ENCODE measurements at regions of chr4 and their contacts with region 1.

Region 1: DNA sequence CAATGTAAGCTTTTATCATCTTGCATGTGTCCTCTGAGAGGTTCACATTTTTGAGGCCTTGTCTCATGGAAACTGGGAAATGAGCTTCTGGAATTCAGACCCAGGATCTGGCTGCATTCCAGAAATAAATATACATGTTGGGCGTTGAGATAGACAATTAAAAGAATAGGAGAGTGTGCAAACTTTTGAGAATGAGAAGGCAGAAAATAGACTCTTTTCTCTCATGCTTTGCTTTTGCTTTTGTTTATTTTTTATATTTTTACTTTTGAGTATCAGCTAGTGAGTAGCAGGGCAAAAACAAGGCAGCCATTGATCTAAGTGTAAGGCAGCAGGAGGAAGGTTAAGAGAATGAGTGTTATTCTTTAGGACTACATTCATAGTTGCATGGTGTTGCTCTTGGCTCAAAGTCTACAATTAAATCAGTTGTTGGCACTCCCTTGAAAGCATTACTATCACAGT is 12.4 kb downstream of the SHROOM3 start:
- DNase-seq: peak; percentile 30
- H3K4me3 ChIP-seq: no peak overlapping the region
- H3K27ac ChIP-seq: no peak overlapping the region
- H3K4me1 ChIP-seq: peaks cover 8% of the 10 kb centered on the region
- H3K27me3 ChIP-seq: no peaks in the 10 kb centered on the region
- CTCF ChIP-seq: no peak

Region 2: GRCh38 chr4:76270244-76271175 is 176.9 kb before region 1 on chr4:
- CTCF ChIA-PET with region 1: interaction called, 11 read pairs
- dilution Hi-C with region 1: no loop called
- in situ Hi-C with region 1: no loop called
- intact Hi-C with region 1: no loop called
- DNase-seq: peak; percentile 85
- H3K4me3 ChIP-seq: no peak overlapping the region
- H3K27ac ChIP-seq: no peak overlapping the region
- H3K4me1 ChIP-seq: no peaks in the 10 kb centered on the region
- H3K27me3 ChIP-seq: no peaks in the 10 kb centered on the region
- CTCF ChIP-seq: no peak

Region 3: GRCh38 chr4:76377911-76378310 is 69.5 kb before region 1 on chr4:
- CTCF ChIA-PET with region 1: no interaction called
- dilution Hi-C with region 1: loop called (anchors 5 kb)
- in situ Hi-C with region 1: no loop called
- intact Hi-C with region 1: no loop called
- DNase-seq: no peak
- H3K4me3 ChIP-seq: no peak overlapping the region
- H3K27ac ChIP-seq: no peak overlapping the region
- H3K4me1 ChIP-seq: peaks cover 8% of the 10 kb centered on the region
- H3K27me3 ChIP-seq: no peaks in the 10 kb centered on the region
- CTCF ChIP-seq: peak; percentile 47 to 59